Ascending aorta (tissue), 2 donors: ENCODE measurements at regions of chr6 and their contacts with region 1.

Region 1: DNA sequence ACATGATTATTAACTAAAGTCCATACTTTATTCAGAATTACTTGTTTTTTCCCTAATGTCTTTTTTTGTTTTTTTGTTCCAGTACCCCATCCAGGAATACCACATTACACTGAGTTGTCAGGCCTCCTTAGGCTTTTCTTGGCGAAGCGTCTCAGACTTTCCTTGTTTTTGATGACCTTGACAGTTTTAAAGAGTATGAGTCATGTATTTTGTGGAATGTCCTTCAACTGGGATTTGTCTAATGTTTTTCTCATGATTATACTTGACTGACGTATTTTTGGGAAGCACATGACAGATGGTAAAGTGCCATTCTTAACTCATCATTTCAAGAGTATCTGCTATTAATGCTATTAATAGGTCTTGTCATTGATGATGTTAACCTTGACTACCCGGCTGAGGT is 23.6 kb downstream of the ENPP1 start:
- DNase-seq: peak in 1 of 2 donors; percentile 70
- H3K4me3 ChIP-seq: no peak overlapping the region
- H3K27ac ChIP-seq: peak overlapping the region; percentile 41 to 77
- H3K4me1 ChIP-seq: peaks cover 0 to 21% of the 10 kb centered on the region in 2 donors
- H3K27me3 ChIP-seq: no peaks in the 10 kb centered on the region
- CTCF ChIP-seq: no peak

Region 2: GRCh38 chr6:131761060-131761761 is 70.2 kb before region 1 on chr6:
- intact Hi-C with region 1: loop called (anchors 5 kb)
- DNase-seq: no peak
- H3K4me3 ChIP-seq: no peak overlapping the region
- H3K27ac ChIP-seq: peak overlapping the region; percentile 49 to 56
- H3K4me1 ChIP-seq: peaks cover 6 to 34% of the 10 kb centered on the region in 2 donors
- H3K27me3 ChIP-seq: no peaks in the 10 kb centered on the region
- CTCF ChIP-seq: no peak

Region 3: GRCh38 chr6:131807644-131808459 is 23.5 kb before region 1 on chr6 and contains the start of gene ENPP1:
- intact Hi-C with region 1: loop called (anchors 1 kb)
- DNase-seq: peak; percentile 53 to 93
- H3K4me3 ChIP-seq: peak within 1 kb of the TSS; percentile 65 to 67
- H3K27ac ChIP-seq: peak within 1 kb of the TSS; percentile 84 to 86
- H3K4me1 ChIP-seq: peaks cover 8 to 27% of the 10 kb centered on the region in 2 donors
- H3K27me3 ChIP-seq: no peaks in the 10 kb centered on the region
- CTCF ChIP-seq: peak; percentile 37 to 51 (median 49)
- total RNA-seq, gene ENPP1: 4.5 TPM

Region 4: GRCh38 chr6:131937703-131938631 is 106.6 kb after region 1 on chr6:
- intact Hi-C with region 1: no loop called
- DNase-seq: no peak
- H3K4me3 ChIP-seq: no peak overlapping the region
- H3K27ac ChIP-seq: no peak overlapping the region
- H3K4me1 ChIP-seq: no peaks in the 10 kb centered on the region
- H3K27me3 ChIP-seq: no peaks in the 10 kb centered on the region
- CTCF ChIP-seq: no peak

Region 5: GRCh38 chr6:132813173-132813856 is 981.9 kb after region 1 on chr6:
- intact Hi-C with region 1: loop called (anchors 5 kb)
- DNase-seq: peak in 1 of 2 donors; percentile 74
- H3K4me3 ChIP-seq: peak overlapping the region; percentile 60 to 76
- H3K27ac ChIP-seq: peak overlapping the region; percentile 54 to 56
- H3K4me1 ChIP-seq: peaks cover 10 to 20% of the 10 kb centered on the region in 2 donors
- H3K27me3 ChIP-seq: no peaks in the 10 kb centered on the region
- CTCF ChIP-seq: no peak